ENCODE measurements at regions of chr4 and their contacts with region 1.

Region 1: DNA sequence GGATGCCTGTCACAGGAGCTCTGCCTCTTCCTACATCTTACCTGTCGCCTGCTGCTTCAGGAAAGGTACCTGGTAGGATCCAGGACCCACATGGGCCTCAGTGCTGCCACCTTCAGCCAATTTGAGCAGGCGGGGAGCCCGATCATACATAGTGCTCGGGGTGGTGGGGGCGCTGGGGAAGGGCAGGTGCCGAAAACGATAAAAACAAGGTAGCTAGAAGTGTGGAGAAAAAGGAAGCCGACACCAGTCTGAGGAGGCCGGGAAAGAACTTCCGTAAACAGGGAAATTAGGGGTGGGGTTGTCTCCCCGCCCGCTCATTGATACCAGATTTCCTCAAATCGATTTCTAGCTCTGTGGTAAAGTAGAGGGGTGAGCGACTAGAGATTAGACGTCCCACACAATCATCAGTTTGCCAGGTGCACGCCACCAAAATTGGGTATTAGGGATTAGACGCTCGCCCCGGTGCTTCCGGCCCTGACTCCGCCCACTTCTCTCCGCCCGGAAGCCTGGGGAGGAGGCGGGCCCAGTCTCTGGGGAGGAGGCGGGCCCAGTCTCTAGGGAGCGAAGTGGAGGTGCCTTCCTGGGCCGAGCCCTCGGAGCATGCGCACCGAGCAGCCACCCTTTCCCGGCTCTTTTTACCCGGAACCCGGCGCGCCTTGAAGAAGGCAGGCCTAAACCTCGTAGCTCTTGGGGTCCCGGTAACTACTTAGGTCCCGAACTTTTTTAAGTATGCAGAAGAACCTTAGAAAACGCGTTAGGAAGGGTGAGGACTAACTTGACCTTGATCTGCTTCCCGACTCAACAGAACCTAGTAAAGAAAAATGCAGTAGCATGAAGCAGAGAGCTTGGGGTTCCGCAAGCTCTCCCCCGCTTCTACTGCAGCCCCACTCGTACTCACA is at the start of gene STPG2:
- DNase-seq: peak; percentile 89 to 94 (median 91)
- H3K4me3 ChIP-seq: peak within 1 kb of the TSS; percentile 85
- H3K4me3 Mint-ChIP-seq: peak within 1 kb of the TSS; percentile 92 to 98 (median 95)
- H3K27ac ChIP-seq: peak within 1 kb of the TSS; percentile 78
- H3K27ac Mint-ChIP-seq: peak within 1 kb of the TSS; percentile 93 to 99 (median 98)
- H3K4me1 ChIP-seq: peaks cover 17% of the 10 kb centered on the region
- H3K4me1 Mint-ChIP-seq: peaks cover 18 to 35% (median 33%) of the 10 kb centered on the region in 3 donors
- H3K27me3 ChIP-seq: no peaks in the 10 kb centered on the region
- H3K27me3 Mint-ChIP-seq: no peaks in the 10 kb centered on the region
- total RNA-seq, gene STPG2: not detected

Region 2: DNA sequence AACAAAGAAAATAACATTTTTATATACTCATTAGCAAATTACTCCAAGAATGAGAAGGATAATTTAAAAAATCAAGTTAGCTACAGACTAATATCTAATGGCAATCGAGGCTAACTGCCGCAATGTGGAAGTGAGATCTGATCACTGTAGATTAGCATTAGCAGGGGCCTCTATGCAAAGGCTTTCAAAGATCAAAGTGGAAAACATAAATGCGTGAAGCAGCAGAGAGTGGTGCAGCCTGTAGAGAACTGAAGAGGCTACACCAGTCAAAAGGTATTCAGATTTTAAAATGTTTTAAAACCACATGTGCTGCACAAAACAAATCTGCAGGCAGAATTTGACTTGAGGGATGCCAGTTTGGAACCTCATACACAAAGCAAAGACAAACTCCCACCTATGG is 94.0 kb after region 1 on chr4:
- CTCF ChIA-PET with region 1: no interaction called
- POLR2A ChIA-PET with region 1: no interaction called
- DNase-seq: no peak
- H3K4me3 ChIP-seq: no peak overlapping the region
- H3K4me3 Mint-ChIP-seq: no peak overlapping the region
- H3K27ac ChIP-seq: no peak overlapping the region
- H3K27ac Mint-ChIP-seq: peak overlapping the region in 1 of 8 donors; percentile 9
- H3K4me1 ChIP-seq: no peaks in the 10 kb centered on the region
- H3K4me1 Mint-ChIP-seq: no peaks in the 10 kb centered on the region
- H3K27me3 ChIP-seq: no peaks in the 10 kb centered on the region
- H3K27me3 Mint-ChIP-seq: peaks cover 5 to 15% of the 10 kb centered on the region in 2 donors

Region 3: GRCh38 chr4:98260579-98261290 is 117.5 kb after region 1 on chr4:
- CTCF ChIA-PET with region 1: no interaction called
- POLR2A ChIA-PET with region 1: interaction called, 14 read pairs
- DNase-seq: peak in 4 of 5 donors; percentile 82 to 91 (median 85)
- H3K4me3 ChIP-seq: peak overlapping the region; percentile 83
- H3K4me3 Mint-ChIP-seq: peak overlapping the region; percentile 89 to 97 (median 92)
- H3K27ac ChIP-seq: peak overlapping the region; percentile 87
- H3K27ac Mint-ChIP-seq: peak overlapping the region; percentile 89 to 97 (median 94)
- H3K4me1 ChIP-seq: peaks cover 32% of the 10 kb centered on the region
- H3K4me1 Mint-ChIP-seq: peaks cover 47 to 53% (median 53%) of the 10 kb centered on the region in 3 donors
- H3K27me3 ChIP-seq: no peaks in the 10 kb centered on the region
- H3K27me3 Mint-ChIP-seq: no peaks in the 10 kb centered on the region

Measured in CD8-positive, alpha-beta memory T cell (primary cell).